MCF 10A (cell line): ENCODE measurements at regions of chr14 and their contacts with region 1.

Region 1: DNA sequence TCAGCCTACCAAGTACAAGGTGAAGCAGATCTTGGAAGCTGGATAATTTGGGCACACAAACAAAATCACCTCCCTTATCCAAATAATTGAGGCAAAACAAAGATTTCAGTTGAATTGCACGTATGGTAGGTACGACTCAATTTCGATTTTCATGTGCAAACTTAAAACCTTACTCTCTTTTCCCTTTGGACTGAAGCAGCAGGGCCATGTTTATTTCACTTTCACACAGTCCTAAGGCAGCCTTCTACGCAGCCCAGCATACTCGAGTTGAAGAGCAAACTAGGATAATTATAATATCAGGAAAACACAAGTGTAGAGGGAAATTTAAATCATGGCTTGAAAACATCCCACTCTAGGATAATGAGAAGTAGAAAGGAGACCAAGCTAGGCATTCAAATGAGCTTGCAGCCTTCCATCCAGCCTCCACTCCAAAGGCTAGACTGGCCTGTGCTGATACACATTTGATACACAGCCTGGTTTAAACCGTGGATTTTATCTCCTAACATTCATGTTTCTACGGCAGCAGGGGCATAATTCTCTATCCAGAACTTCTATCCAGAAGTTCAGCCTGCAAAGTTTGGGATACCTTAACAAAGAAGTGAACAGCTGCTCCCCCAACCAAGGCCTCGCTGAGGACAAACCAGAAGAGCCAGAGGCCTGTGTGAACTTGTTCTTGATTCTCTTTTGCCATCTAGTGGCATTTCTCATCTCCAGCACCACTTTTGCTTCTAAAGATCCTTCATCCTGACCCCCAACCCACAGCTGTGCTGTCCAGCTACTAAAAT is 2.4 kb upstream of the RNASE7 start:
- DNase-seq: peak; percentile 69
- H3K4me3 Mint-ChIP-seq: no peak overlapping the region
- H3K27ac Mint-ChIP-seq: no peak overlapping the region
- H3K4me1 Mint-ChIP-seq: peaks cover 34% of the 10 kb centered on the region
- H3K27me3 Mint-ChIP-seq: no peaks in the 10 kb centered on the region
- CTCF ChIP-seq: peak; percentile 51

Region 2: GRCh38 chr14:20697273-20698017 is 342.3 kb before region 1 on chr14:
- CTCF ChIA-PET with region 1: interaction called, 30 read pairs
- POLR2A ChIA-PET with region 1: no interaction called
- intact Hi-C with region 1: loop called (anchors 1 kb)
- DNase-seq: peak; percentile 78
- H3K4me3 Mint-ChIP-seq: no peak overlapping the region
- H3K27ac Mint-ChIP-seq: no peak overlapping the region
- H3K4me1 Mint-ChIP-seq: no peaks in the 10 kb centered on the region
- H3K27me3 Mint-ChIP-seq: no peaks in the 10 kb centered on the region
- CTCF ChIP-seq: peak; percentile 73

Region 3: GRCh38 chr14:20998664-20999366 is 41.0 kb before region 1 on chr14 and contains the start of gene SLC39A2:
- CTCF ChIA-PET with region 1: interaction called, 18 read pairs
- POLR2A ChIA-PET with region 1: no interaction called
- intact Hi-C with region 1: no loop called
- DNase-seq: peak; percentile 83
- H3K4me3 Mint-ChIP-seq: peak within 1 kb of the TSS; percentile 8
- H3K27ac Mint-ChIP-seq: peak within 1 kb of the TSS; percentile 73
- H3K4me1 Mint-ChIP-seq: peaks cover 18% of the 10 kb centered on the region
- H3K27me3 Mint-ChIP-seq: no peaks in the 10 kb centered on the region
- CTCF ChIP-seq: no peak
- total RNA-seq, gene SLC39A2: not detected in 2 replicates

Region 4: DNA sequence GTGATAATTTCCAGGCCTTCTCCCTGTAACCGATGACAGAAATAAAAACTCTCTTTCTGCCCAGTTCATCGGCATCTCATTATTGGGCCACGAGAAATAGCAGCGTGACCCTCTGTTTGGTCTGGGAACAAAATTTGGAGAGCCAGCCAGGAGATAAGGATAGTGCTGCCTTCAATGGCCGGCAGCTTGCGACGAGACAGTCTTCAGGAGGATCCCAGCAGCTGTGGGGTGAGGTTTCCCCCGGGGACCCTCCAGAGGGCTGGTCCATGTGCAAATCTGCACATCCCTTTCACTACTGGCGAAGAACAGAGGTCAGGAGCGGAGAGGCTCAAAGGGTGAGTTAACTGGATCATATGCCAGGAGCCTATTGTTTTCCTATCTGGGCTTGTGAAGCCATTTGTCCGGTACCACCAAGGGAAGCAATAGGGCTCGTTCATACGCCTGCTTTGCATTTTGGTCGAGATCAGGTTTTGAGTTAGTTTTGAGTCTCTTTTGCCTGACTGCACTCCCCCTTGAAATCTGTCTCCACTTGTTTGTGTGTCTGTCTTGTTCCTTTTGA is 35.9 kb before region 1 on chr14:
- CTCF ChIA-PET with region 1: interaction called, 18 read pairs
- POLR2A ChIA-PET with region 1: no interaction called
- intact Hi-C with region 1: no loop called
- DNase-seq: no peak
- H3K4me3 Mint-ChIP-seq: no peak overlapping the region
- H3K27ac Mint-ChIP-seq: no peak overlapping the region
- H3K4me1 Mint-ChIP-seq: peaks cover 4% of the 10 kb centered on the region
- H3K27me3 Mint-ChIP-seq: no peaks in the 10 kb centered on the region
- CTCF ChIP-seq: no peak

Region 5: GRCh38 chr14:21025371-21026151 is 14.2 kb before region 1 on chr14:
- CTCF ChIA-PET with region 1: interaction called, 391 read pairs
- POLR2A ChIA-PET with region 1: interaction called, 3 read pairs
- intact Hi-C with region 1: no loop called
- DNase-seq: no peak
- H3K4me3 Mint-ChIP-seq: peak overlapping the region; percentile 51
- H3K27ac Mint-ChIP-seq: no peak overlapping the region
- H3K4me1 Mint-ChIP-seq: no peaks in the 10 kb centered on the region
- H3K27me3 Mint-ChIP-seq: peaks cover 20% of the 10 kb centered on the region
- CTCF ChIP-seq: no peak

Region 6: DNA sequence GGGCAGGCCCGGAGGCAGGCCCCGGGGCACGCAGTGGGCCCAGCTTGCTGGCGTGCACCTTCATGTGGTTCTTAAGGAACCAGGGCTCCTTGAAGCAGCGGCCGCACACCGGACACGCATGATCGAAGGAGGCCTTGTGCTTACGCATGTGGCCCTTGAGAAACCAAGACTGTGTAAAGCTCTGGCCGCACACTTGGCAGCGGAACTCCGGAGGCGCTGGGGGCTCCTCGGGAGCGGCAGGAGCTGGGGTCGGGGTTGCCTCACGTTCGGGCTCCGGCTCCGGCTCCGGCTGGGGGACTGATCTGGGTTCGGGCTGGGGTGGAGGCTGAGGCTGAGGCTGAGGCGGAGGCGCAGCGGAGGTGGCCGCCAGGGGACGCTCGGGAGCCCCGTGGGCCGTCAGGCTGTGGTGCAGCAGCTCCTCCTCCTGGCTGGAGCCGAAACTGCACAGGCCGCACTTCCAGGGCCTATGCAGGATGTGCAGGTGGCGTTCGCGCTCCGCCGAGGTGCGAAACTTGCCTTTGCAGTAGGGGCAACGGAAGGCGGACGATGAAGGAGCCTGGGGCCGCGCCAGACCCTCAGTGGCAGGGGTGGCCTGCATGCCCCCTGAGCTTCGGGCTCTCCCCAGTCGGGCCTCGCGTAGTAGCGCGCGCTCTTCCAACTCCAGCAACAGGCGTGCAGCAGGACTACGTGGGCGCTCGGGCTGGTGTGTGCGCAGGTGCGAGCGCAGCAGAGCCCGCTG is 52.7 kb after region 1 on chr14:
- CTCF ChIA-PET with region 1: interaction called, 31 read pairs
- POLR2A ChIA-PET with region 1: interaction called, 8 read pairs
- intact Hi-C with region 1: no loop called
- DNase-seq: peak; percentile 64
- H3K4me3 Mint-ChIP-seq: peak overlapping the region; percentile 19
- H3K27ac Mint-ChIP-seq: no peak overlapping the region
- H3K4me1 Mint-ChIP-seq: peaks cover 24% of the 10 kb centered on the region
- H3K27me3 Mint-ChIP-seq: no peaks in the 10 kb centered on the region
- CTCF ChIP-seq: peak; percentile 100

Region 7: GRCh38 chr14:21098076-21098891 is 58.5 kb after region 1 on chr14 and contains the start of gene ZNF219:
- CTCF ChIA-PET with region 1: interaction called, 52 read pairs
- POLR2A ChIA-PET with region 1: interaction called, 15 read pairs
- intact Hi-C with region 1: no loop called
- DNase-seq: peak; percentile 67
- H3K4me3 Mint-ChIP-seq: peak within 1 kb of the TSS; percentile 85
- H3K27ac Mint-ChIP-seq: peak within 1 kb of the TSS; percentile 90
- H3K4me1 Mint-ChIP-seq: peaks cover 34% of the 10 kb centered on the region
- H3K27me3 Mint-ChIP-seq: no peaks in the 10 kb centered on the region
- CTCF ChIP-seq: no peak
- total RNA-seq, gene ZNF219: 18.4 and 33.8 TPM in 2 replicates